Spleen (tissue), 13 donors: ENCODE measurements at regions of chr7 and their contacts with region 1.

Region 1: DNA sequence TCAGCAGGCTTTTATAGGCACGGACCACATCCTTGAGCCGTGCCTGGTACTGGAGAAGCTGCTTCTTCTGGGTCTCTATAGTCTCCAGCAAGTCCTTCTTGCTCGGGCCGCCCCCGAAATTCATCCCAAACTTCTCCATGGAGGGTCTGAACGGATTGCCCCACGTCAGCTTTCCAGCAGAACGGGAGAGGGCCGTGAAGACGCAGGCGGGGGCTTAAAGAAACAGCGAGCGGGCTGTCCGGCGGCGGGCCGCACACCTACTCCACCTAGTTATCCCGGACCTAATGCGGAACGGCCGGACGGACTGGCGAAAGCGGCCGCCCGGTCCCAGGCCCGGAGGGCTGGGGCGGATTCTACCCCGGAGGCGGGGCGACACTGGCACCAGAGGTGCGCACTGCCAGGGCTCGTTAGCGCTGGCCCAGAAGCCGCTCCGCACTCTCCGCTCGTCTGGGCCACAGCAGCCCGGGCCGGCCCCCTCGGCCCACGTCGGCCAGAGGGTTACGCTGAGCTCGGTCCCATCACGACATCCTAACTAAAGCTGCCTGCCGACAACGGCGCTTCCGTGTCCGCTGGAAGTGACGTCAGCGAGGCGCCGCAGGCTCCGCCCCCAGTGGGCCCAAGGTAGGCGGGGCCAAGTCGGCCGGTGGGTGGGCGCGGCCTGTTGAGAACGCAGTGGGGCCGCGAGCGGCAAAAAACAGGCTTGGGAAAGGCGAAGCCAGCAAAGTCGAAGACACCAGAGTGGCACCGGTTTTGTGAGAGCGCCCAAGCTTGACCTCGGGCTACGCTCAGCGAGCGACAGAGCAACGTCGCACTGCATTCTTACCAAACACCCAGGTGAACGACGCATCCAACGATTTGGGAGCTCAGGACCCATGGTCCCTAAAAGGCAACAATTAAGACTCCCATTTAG is at the start of gene GCC1:
- DNase-seq: peak; percentile 98
- H3K4me3 ChIP-seq: peak within 1 kb of the TSS; percentile 69 to 88 (median 78)
- H3K27ac ChIP-seq: peak within 1 kb of the TSS; percentile 83 to 97 (median 92)
- H3K4me1 ChIP-seq: peaks cover 44 to 88% (median 76%) of the 10 kb centered on the region in 6 donors
- H3K27me3 ChIP-seq: no peaks in the 10 kb centered on the region
- CTCF ChIP-seq: peak in 2 of 11 experiments; percentile 7 to 19
- POLR2A ChIP-seq: peak in 1 of 3 donors; percentile 71
- total RNA-seq, gene GCC1: 13.5 to 24.8 (median 17.9) TPM

Region 2: GRCh38 chr7:127392566-127393367 is 192.5 kb before region 1 on chr7 and contains the start of gene ZNF800:
- intact Hi-C with region 1: loop called (anchors 10 kb)
- DNase-seq: peak; percentile 98
- H3K4me3 ChIP-seq: peak within 1 kb of the TSS; percentile 62 to 99 (median 90)
- H3K27ac ChIP-seq: peak within 1 kb of the TSS; percentile 94 to 99 (median 98)
- H3K4me1 ChIP-seq: peaks cover 22 to 64% (median 49%) of the 10 kb centered on the region in 6 donors
- H3K27me3 ChIP-seq: no peaks in the 10 kb centered on the region
- CTCF ChIP-seq: peak in 4 of 11 experiments; percentile 5 to 19 (median 13)
- POLR2A ChIP-seq: peak in 2 of 3 donors; percentile 38 to 91
- total RNA-seq, gene ZNF800: 39.0 to 54.0 (median 45.2) TPM

Region 3: GRCh38 chr7:127651556-127652332 is 66.4 kb after region 1 on chr7 and contains the start of gene SND1:
- intact Hi-C with region 1: loop called (anchors 5 kb)
- DNase-seq: peak; percentile 100
- H3K4me3 ChIP-seq: peak within 1 kb of the TSS; percentile 67 to 94 (median 91)
- H3K27ac ChIP-seq: peak within 1 kb of the TSS; percentile 90 to 98 (median 94)
- H3K4me1 ChIP-seq: peaks cover 17 to 51% (median 46%) of the 10 kb centered on the region in 6 donors
- H3K27me3 ChIP-seq: no peaks in the 10 kb centered on the region
- CTCF ChIP-seq: peak in 4 of 11 experiments; percentile 33 to 56 (median 43)
- POLR2A ChIP-seq: peak in 1 of 3 donors; percentile 72
- total RNA-seq, gene SND1: 99.5 to 173 (median 139) TPM